Activated CD4-positive, alpha-beta memory T cell treated with anti-CD3 and anti-CD28 coated beads, Interleukin-2, amount 10 ng/mL, durations not matched to agents 7 days and 5 days (primary cell): ENCODE measurements at regions of chr10 and their contacts with region 1.

Region 1: GRCh38 chr10:31031558-31032257 is at the start of gene ZNF438:
- DNase-seq: peak; percentile 95
- H3K4me3 Mint-ChIP-seq: peak within 1 kb of the TSS; percentile 85
- H3K27ac Mint-ChIP-seq: peak within 1 kb of the TSS; percentile 98
- H3K4me1 Mint-ChIP-seq: peaks cover 29% of the 10 kb centered on the region
- H3K27me3 Mint-ChIP-seq: no peaks in the 10 kb centered on the region
- total RNA-seq, gene ZNF438: 6.3 to 6.5 TPM

Region 2: GRCh38 chr10:30751678-30752331 is 279.9 kb before region 1 on chr10:
- CTCF ChIA-PET with region 1: interaction called, 12 read pairs
- POLR2A ChIA-PET with region 1: no interaction called
- DNase-seq: peak; percentile 80
- H3K4me3 Mint-ChIP-seq: peak overlapping the region; percentile 9
- H3K27ac Mint-ChIP-seq: peak overlapping the region; percentile 80
- H3K4me1 Mint-ChIP-seq: peaks cover 52% of the 10 kb centered on the region
- H3K27me3 Mint-ChIP-seq: no peaks in the 10 kb centered on the region

Region 3: GRCh38 chr10:30986053-30986555 is 45.6 kb before region 1 on chr10:
- CTCF ChIA-PET with region 1: interaction called, 8 read pairs
- POLR2A ChIA-PET with region 1: interaction called, 11 read pairs
- DNase-seq: no peak
- H3K4me3 Mint-ChIP-seq: peak overlapping the region; percentile 33
- H3K27ac Mint-ChIP-seq: peak overlapping the region; percentile 88
- H3K4me1 Mint-ChIP-seq: peaks cover 31% of the 10 kb centered on the region
- H3K27me3 Mint-ChIP-seq: no peaks in the 10 kb centered on the region

Region 4: DNA sequence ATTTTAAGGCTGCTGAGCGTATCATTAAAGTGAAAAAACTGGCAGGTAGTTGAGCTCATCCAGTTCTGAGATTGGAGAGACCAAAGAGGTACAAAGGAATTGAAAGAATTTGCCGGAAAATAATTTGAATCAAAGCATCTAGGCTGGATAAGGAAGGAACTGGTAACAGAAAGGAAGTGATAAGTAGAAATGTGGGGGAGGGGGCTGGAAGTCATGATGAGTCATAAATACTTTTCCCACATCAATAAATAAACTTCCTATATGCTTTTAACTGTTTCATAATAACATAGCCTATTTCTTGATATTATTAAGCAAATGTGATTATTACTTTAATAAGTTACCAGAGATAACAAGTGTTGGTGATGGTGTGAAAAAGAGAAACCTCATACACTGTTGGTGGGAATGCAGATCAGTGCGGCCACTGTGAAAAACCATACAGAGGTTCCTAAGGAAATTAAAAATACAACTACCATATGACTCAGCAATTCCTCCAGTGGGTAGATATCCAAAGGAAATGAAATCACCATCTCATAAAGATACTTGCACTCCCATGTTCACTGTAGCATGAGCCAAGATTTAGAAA is 27.0 kb before region 1 on chr10:
- CTCF ChIA-PET with region 1: interaction called, 25 read pairs
- POLR2A ChIA-PET with region 1: interaction called, 8 read pairs
- DNase-seq: no peak
- H3K4me3 Mint-ChIP-seq: no peak overlapping the region
- H3K27ac Mint-ChIP-seq: no peak overlapping the region
- H3K4me1 Mint-ChIP-seq: peaks cover 48% of the 10 kb centered on the region
- H3K27me3 Mint-ChIP-seq: no peaks in the 10 kb centered on the region

Region 5: GRCh38 chr10:31070025-31070424 is 38.3 kb after region 1 on chr10:
- CTCF ChIA-PET with region 1: no interaction called
- POLR2A ChIA-PET with region 1: no interaction called
- DNase-seq: no peak
- H3K4me3 Mint-ChIP-seq: no peak overlapping the region
- H3K27ac Mint-ChIP-seq: no peak overlapping the region
- H3K4me1 Mint-ChIP-seq: no peaks in the 10 kb centered on the region
- H3K27me3 Mint-ChIP-seq: peaks cover 28% of the 10 kb centered on the region

Region 6: GRCh38 chr10:31083765-31084184 is 52.1 kb after region 1 on chr10:
- CTCF ChIA-PET with region 1: interaction called, 10 read pairs
- POLR2A ChIA-PET with region 1: no interaction called
- DNase-seq: peak; percentile 66
- H3K4me3 Mint-ChIP-seq: no peak overlapping the region
- H3K27ac Mint-ChIP-seq: no peak overlapping the region
- H3K4me1 Mint-ChIP-seq: peaks cover 7% of the 10 kb centered on the region
- H3K27me3 Mint-ChIP-seq: no peaks in the 10 kb centered on the region

Region 7: GRCh38 chr10:31374146-31374696 is 342.5 kb after region 1 on chr10:
- CTCF ChIA-PET with region 1: no interaction called
- POLR2A ChIA-PET with region 1: no interaction called
- DNase-seq: no peak
- H3K4me3 Mint-ChIP-seq: no peak overlapping the region
- H3K27ac Mint-ChIP-seq: no peak overlapping the region
- H3K4me1 Mint-ChIP-seq: peaks cover 3% of the 10 kb centered on the region
- H3K27me3 Mint-ChIP-seq: no peaks in the 10 kb centered on the region